Activated T-helper 2 cell treated with anti-CD3 and anti-CD28 coated beads, Interferon-gamma antibody, Interleukin-2, Interleukin-4, amounts not matched to agents 10 μg/mL and 5 μg/mL and 100 μg/mL, durations not matched to agents 14 hours and 24 hours and 36 hours (primary cell): ENCODE measurements at regions of chr12 and their contacts with region 1.

Region 1: GRCh38 chr12:6451348-6452244 is at the start of gene TAPBPL:
- DNase-seq: peak; percentile 78
- H3K4me3 Mint-ChIP-seq: peak within 1 kb of the TSS; percentile 92
- H3K27ac Mint-ChIP-seq: peak within 1 kb of the TSS; percentile 92
- H3K4me1 Mint-ChIP-seq: peaks cover 54% of the 10 kb centered on the region
- H3K27me3 Mint-ChIP-seq: no peaks in the 10 kb centered on the region
- total RNA-seq, gene TAPBPL: 30.9 and 37.4 TPM in 2 replicates

Region 2: DNA sequence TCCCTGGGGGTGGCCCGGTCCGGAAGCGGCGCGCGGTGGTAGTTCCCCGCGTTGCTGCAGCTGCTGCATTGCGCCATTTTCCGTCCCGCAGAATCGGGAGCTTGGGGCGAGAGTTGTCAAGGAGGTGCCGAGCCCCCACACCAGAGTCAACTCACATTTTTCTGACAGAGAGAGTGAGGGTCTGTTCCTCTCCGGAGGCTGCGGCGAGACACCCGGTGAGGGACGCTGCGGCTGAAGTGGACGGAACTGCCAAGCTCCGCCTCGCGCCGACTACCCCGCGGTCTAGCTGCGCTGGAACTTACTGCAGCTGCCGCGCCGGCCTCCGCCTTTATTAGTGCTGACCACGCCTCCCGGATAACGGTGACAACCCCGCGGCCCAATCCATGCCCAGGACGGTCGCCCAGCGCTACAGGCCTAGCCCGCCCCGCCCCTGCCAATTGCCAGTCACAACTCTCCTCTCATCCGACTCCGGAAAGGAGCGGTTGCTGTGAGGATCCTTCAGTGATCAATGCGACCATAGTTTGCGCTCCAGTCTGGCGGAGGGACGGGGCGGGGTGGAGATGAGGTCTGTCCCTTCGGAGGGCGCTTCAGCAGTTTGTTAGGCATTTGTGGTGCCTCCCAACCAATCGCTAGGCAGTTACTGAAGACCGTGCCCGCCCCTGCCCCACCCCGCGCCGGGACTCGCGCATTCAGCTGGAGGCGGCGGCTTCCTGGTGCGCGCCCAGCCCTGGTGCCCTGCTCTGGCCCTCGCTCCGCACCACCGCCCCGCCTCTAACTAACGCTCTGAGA is 19.0 kb after region 1 on chr12 and contains the start of gene VAMP1:
- intact Hi-C with region 1: loop called (anchors 2 kb)
- DNase-seq: peak; percentile 98
- H3K4me3 Mint-ChIP-seq: peak within 1 kb of the TSS; percentile 88
- H3K27ac Mint-ChIP-seq: peak within 1 kb of the TSS; percentile 86
- H3K4me1 Mint-ChIP-seq: peaks cover 47% of the 10 kb centered on the region
- H3K27me3 Mint-ChIP-seq: no peaks in the 10 kb centered on the region
- total RNA-seq, gene VAMP1: 38.7 and 40.7 TPM in 2 replicates

Region 3: GRCh38 chr12:6752921-6753771 is 301.6 kb after region 1 on chr12 and contains the start of gene MLF2:
- intact Hi-C with region 1: no loop called
- DNase-seq: peak; percentile 97
- H3K4me3 Mint-ChIP-seq: peak within 1 kb of the TSS; percentile 94
- H3K27ac Mint-ChIP-seq: peak within 1 kb of the TSS; percentile 96
- H3K4me1 Mint-ChIP-seq: peaks cover 32% of the 10 kb centered on the region
- H3K27me3 Mint-ChIP-seq: no peaks in the 10 kb centered on the region
- total RNA-seq, gene MLF2: 162 and 172 TPM in 2 replicates